Sigmoid colon (tissue), 7 donors: ENCODE measurements at regions of chr10 and their contacts with region 1.

Region 1: DNA sequence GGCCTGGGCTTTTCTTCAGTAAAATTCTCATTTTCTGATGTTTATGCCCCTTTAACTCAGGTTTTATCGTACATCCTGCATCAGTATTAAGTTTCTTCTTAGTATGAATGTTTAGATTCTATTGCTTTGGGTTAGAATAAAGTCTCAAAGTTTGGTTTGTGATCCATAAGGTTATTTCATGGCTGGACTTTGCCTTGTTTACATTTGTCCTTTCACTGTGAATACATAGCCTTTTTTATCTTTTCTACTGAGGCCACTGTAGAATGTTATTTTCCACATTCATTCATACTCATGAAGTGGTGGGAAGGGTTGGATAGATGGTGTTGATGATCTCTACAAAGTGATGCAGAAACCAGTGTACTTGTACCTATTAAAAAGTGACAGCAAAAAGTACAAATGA is 59.8 kb downstream of the CCSER2 start:
- DNase-seq: no peak
- H3K4me3 ChIP-seq: no peak overlapping the region
- H3K27ac ChIP-seq: no peak overlapping the region
- H3K4me1 ChIP-seq: peaks cover 0 to 13% (median 5%) of the 10 kb centered on the region in 4 donors
- H3K27me3 ChIP-seq: no peaks in the 10 kb centered on the region
- CTCF ChIP-seq: no peak
- EP300 ChIP-seq: no peak
- POLR2A ChIP-seq: no peak

Region 2: GRCh38 chr10:84484541-84484940 is 96.4 kb after region 1 on chr10:
- intact Hi-C with region 1: no loop called
- DNase-seq: no peak
- H3K4me3 ChIP-seq: no peak overlapping the region
- H3K27ac ChIP-seq: no peak overlapping the region
- H3K4me1 ChIP-seq: no peaks in the 10 kb centered on the region
- H3K27me3 ChIP-seq: no peaks in the 10 kb centered on the region
- CTCF ChIP-seq: no peak
- EP300 ChIP-seq: no peak
- POLR2A ChIP-seq: no peak

Region 3: DNA sequence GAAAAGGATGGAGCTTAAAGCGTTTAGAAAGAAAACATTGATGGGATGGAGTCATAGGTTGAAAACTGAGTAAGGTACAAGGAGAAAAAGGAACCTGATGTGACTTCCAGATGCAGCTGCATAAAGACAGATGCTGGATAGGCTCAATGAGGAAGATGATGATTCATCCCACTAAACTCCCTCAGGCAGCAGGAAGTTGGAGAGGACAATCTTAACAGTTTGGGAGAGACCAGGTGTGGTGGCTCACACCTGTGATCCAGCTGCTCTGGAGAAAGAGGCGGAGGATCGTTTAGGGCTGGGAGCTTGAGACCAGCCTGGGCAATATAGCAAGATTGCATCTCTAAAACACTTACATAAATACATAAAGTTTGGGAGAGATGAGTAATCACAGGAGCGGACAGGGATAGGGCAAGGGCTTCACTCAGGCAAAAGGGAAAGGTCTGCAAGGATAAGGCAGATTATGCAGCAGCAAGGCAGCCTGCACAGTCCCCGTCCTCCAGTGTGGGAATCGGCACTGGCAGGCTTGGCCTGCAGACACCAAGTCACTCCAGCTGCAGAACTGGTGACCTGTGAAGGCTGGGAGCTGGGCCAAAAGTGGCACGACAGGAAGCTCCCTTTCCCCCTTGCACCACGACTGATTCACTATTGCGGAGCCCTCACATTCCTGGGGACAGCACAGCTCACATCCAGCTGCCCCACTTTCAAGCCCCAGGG is 1540.0 kb after region 1 on chr10:
- intact Hi-C with region 1: loop called (anchors 10 kb)
- DNase-seq: no peak
- H3K4me3 ChIP-seq: no peak overlapping the region
- H3K27ac ChIP-seq: no peak overlapping the region
- H3K4me1 ChIP-seq: peaks cover 0 to 14% (median 12%) of the 10 kb centered on the region in 4 donors
- H3K27me3 ChIP-seq: no peaks in the 10 kb centered on the region
- CTCF ChIP-seq: no peak
- EP300 ChIP-seq: no peak
- POLR2A ChIP-seq: no peak